Heart right ventricle (tissue), 16 donors: ENCODE measurements at regions of chr5 and their contacts with region 1.

Region 1: GRCh38 chr5:124935065-124935464 is 188.6 kb upstream of the ZNF608 start:
- DNase-seq: no peak
- ATAC-seq: no peak
- H3K4me3 ChIP-seq: no peak overlapping the region
- H3K27ac ChIP-seq: no peak overlapping the region
- H3K4me1 ChIP-seq: peaks cover 0 to 9% (median 0%) of the 10 kb centered on the region in 9 donors
- H3K27me3 ChIP-seq: no peaks in the 10 kb centered on the region
- CTCF ChIP-seq: no peak

Region 2: DNA sequence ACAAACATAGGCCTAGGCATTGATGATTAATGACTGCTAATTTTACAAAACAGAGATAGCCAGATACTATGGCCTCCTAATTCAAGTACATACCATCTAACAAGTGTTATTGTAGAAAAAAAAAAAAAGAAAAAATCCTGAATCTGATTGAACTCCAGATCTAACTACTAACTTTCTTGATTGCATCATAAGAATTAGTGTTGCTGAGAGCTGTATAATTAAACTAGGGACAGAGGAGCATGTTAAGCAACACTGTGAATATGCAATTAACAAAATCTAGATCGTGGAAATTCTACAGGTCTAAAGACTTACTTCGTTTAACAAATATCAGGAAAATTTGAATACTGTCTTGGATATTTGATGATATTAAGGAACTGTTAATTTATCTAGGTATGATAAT is 19.7 kb after region 1 on chr5:
- intact Hi-C with region 1: loop called in 1 of 10 experiments (anchors 1 kb)
- DNase-seq: no peak
- ATAC-seq: no peak
- H3K4me3 ChIP-seq: no peak overlapping the region
- H3K27ac ChIP-seq: no peak overlapping the region
- H3K4me1 ChIP-seq: peaks cover 0 to 3% (median 0%) of the 10 kb centered on the region in 9 donors
- H3K27me3 ChIP-seq: no peaks in the 10 kb centered on the region
- CTCF ChIP-seq: no peak

Region 3: DNA sequence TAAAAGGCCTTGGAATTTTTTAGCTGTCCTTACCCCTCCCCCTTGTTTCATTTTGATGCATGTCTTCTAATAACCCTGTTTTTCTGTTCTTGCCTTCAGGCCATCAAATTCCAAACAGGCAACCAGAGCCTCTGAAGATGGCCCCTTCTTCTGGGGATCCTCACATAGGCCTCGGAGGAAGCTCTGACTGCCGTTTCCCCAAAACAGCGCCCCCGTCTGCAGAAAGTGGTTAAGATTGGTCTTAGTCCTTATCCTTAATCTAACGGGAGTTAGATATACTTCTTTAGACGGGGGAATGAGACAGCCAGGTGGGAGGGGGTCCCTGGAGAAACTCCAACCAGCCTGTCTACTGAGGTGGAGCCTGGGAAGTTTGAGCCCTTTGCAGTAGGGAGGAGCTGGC is 37.6 kb after region 1 on chr5:
- intact Hi-C with region 1: no loop called
- DNase-seq: no peak
- ATAC-seq: no peak
- H3K4me3 ChIP-seq: no peak overlapping the region
- H3K27ac ChIP-seq: no peak overlapping the region
- H3K4me1 ChIP-seq: no peaks in the 10 kb centered on the region
- H3K27me3 ChIP-seq: no peaks in the 10 kb centered on the region
- CTCF ChIP-seq: no peak

Region 4: GRCh38 chr5:125043781-125044391 is 108.8 kb after region 1 on chr5:
- intact Hi-C with region 1: loop called in 1 of 10 experiments (anchors 10 kb)
- DNase-seq: peak; percentile 67 to 81
- ATAC-seq: peak; percentile 83 to 97 (median 92)
- H3K4me3 ChIP-seq: no peak overlapping the region
- H3K27ac ChIP-seq: peak overlapping the region in 4 of 10 donors; percentile 10 to 55 (median 22)
- H3K4me1 ChIP-seq: peaks cover 4 to 37% (median 30%) of the 10 kb centered on the region in 9 donors
- H3K27me3 ChIP-seq: no peaks in the 10 kb centered on the region
- CTCF ChIP-seq: no peak